ENCODE measurements at regions of chr3 and their contacts with region 1.

Region 1: GRCh38 chr3:148737104-148737530 is 39.4 kb downstream of the AGTR1 start:
- DNase-seq: no peak
- H3K4me3 ChIP-seq: no peak overlapping the region
- H3K27ac ChIP-seq: no peak overlapping the region
- H3K4me1 ChIP-seq: peaks cover 0 to 3% (median 0%) of the 10 kb centered on the region in 4 donors
- H3K27me3 ChIP-seq: no peaks in the 10 kb centered on the region
- CTCF ChIP-seq: no peak
- EP300 ChIP-seq: no peak
- POLR2A ChIP-seq: no peak

Region 2: DNA sequence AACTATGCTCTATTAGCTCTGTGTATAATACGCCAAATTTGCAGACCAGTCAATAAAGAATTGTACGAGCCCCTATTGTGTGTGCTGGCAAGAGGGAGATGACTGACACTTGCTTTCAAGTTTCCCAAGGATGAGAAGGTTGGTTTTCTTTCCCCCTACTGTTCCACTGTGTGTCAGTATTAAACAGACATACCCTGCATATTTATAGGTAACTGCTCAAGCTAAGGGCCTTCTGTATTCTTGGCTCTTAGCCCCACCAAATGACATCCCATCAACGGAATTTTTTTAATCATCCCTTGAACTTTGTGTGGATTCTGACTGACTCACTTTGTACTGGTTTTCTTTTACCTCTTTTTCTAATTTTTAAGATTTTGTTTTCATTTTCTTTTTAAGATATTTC is 193.6 kb after region 1 on chr3:
- in situ Hi-C with region 1: no loop called
- intact Hi-C with region 1: loop called (anchors 10 kb)
- DNase-seq: no peak
- H3K4me3 ChIP-seq: no peak overlapping the region
- H3K27ac ChIP-seq: no peak overlapping the region
- H3K4me1 ChIP-seq: no peaks in the 10 kb centered on the region
- H3K27me3 ChIP-seq: no peaks in the 10 kb centered on the region
- CTCF ChIP-seq: no peak
- EP300 ChIP-seq: no peak
- POLR2A ChIP-seq: no peak